ENCODE measurements at regions of chr2 and their contacts with region 1.

Region 1: GRCh38 chr2:184125874-184126273 is 472.5 kb upstream of the ZNF804A start:
- DNase-seq: no peak
- H3K4me3 ChIP-seq: no peak overlapping the region
- H3K27ac ChIP-seq: no peak overlapping the region
- H3K4me1 ChIP-seq: no peaks in the 10 kb centered on the region
- H3K27me3 ChIP-seq: no peaks in the 10 kb centered on the region
- CTCF ChIP-seq: no peak

Region 2: GRCh38 chr2:184203661-184204060 is 77.8 kb after region 1 on chr2:
- intact Hi-C with region 1: no loop called
- DNase-seq: no peak
- H3K4me3 ChIP-seq: no peak overlapping the region
- H3K27ac ChIP-seq: no peak overlapping the region
- H3K4me1 ChIP-seq: no peaks in the 10 kb centered on the region
- H3K27me3 ChIP-seq: no peaks in the 10 kb centered on the region
- CTCF ChIP-seq: no peak

Region 3: GRCh38 chr2:184410160-184410559 is 284.3 kb after region 1 on chr2:
- intact Hi-C with region 1: no loop called
- DNase-seq: no peak
- H3K4me3 ChIP-seq: no peak overlapping the region
- H3K27ac ChIP-seq: no peak overlapping the region
- H3K4me1 ChIP-seq: no peaks in the 10 kb centered on the region
- H3K27me3 ChIP-seq: no peaks in the 10 kb centered on the region
- CTCF ChIP-seq: no peak

Region 4: GRCh38 chr2:184598316-184599053 is 472.6 kb after region 1 on chr2 and contains the start of gene ZNF804A:
- intact Hi-C with region 1: loop called (anchors 5 kb)
- DNase-seq: peak in 1 of 2 donors; percentile 69
- H3K4me3 ChIP-seq: peak within 1 kb of the TSS; percentile 73 to 74
- H3K27ac ChIP-seq: no peak within 1 kb of the TSS
- H3K4me1 ChIP-seq: peaks cover 0 to 2% of the 10 kb centered on the region in 2 donors
- H3K27me3 ChIP-seq: no peaks in the 10 kb centered on the region
- CTCF ChIP-seq: no peak
- total RNA-seq, gene ZNF804A: not detected

Measured in ascending aorta (tissue), 2 donors.